ENCODE measurements at regions of chr11 and their contacts with region 1.

Region 1: DNA sequence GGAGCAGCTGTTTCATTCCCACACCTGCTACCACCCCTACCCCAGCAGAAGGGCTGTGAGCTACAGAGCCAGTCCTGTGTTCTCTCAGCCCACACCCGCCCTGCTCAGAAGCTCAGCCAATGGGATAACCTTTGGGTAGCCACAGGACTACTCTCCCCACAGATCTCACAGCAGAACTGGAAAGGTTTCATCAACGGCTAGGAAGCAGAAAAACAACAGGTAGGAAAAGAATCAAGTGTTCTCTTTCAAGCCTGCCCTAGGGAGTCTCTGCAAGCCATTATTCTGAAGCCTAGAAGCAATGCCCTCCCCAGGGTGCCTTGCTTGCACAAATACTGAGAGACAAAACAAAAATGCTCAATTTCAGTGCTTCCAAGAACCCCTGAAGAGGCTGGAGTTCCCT is 77.2 kb downstream of the TMPRSS5 start:
- DNase-seq: no peak
- H3K4me3 ChIP-seq: no peak overlapping the region
- H3K27ac ChIP-seq: no peak overlapping the region
- H3K4me1 ChIP-seq: no peaks in the 10 kb centered on the region
- H3K27me3 ChIP-seq: peaks cover 6% of the 10 kb centered on the region
- CTCF ChIP-seq: no peak

Region 2: GRCh38 chr11:112255067-112255720 is 1373.7 kb before region 1 on chr11:
- CTCF ChIA-PET with region 1: no interaction called
- POLR2A ChIA-PET with region 1: no interaction called
- intact Hi-C with region 1: no loop called
- DNase-seq: peak; percentile 41
- H3K4me3 ChIP-seq: no peak overlapping the region
- H3K27ac ChIP-seq: peak overlapping the region; percentile 32
- H3K4me1 ChIP-seq: peaks cover 12% of the 10 kb centered on the region
- H3K27me3 ChIP-seq: no peaks in the 10 kb centered on the region
- CTCF ChIP-seq: no peak

Region 3: DNA sequence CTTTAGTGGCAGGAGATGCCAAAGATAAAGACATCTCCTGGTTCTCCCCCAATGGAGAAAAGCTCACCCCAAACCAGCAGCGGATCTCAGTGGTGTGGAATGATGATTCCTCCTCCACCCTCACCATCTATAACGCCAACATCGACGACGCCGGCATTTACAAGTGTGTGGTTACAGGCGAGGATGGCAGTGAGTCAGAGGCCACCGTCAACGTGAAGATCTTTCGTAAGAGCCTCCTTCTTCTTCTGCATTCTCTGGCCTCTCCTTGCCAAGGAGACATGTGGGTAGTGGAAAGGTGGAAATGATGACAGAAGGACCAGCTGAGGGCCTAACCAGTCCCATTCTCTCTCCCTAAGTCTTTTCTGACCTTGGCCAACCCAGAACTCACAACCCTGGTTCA is 424.6 kb before region 1 on chr11:
- CTCF ChIA-PET with region 1: no interaction called
- POLR2A ChIA-PET with region 1: interaction called, 20 read pairs
- intact Hi-C with region 1: no loop called
- DNase-seq: no peak
- H3K4me3 ChIP-seq: no peak overlapping the region
- H3K27ac ChIP-seq: no peak overlapping the region
- H3K4me1 ChIP-seq: no peaks in the 10 kb centered on the region
- H3K27me3 ChIP-seq: no peaks in the 10 kb centered on the region
- CTCF ChIP-seq: no peak

Measured in A673 (cell line).